ENCODE measurements at regions of chr1 and their contacts with region 1.

Region 1: DNA sequence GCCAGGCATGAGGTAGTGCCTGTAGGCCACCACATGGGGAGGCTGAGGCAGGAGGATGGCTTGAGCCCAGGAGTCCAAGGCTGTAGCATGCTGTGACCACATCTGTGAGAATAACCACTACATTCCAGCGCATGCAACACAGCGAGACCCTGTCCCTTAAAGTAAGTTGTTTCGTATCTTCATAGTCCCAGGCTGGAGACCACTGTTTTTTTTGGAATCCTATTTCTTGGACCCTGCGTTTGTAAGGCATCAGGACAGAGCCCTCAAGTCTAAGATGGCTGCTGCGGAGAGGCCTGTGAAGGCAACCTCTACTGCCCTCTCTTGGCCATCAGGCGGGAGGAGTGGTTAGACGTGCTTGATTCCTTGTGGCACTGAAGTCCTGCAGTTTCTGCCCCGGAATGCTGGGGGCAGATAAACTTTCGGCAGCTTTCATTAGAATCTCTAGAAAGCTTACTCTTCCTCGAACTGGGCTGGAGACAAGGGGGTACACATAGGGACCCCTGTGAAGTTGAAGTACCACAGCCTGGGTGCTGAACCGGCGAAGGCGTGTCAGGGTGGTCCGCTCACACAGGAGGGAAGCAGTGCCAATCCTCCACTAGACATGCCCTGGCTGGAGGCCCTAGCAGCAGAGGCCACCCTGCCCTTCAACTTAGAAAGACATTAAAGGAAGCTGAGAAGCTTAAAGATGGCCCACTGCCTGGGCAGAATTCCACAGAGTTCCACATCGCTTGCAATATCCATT is 36.6 kb downstream of the RABIF start:
- DNase-seq: no peak
- H3K4me3 Mint-ChIP-seq: no peak overlapping the region
- H3K27ac Mint-ChIP-seq: peak overlapping the region; percentile 18
- H3K4me1 Mint-ChIP-seq: peaks cover 37% of the 10 kb centered on the region
- H3K27me3 Mint-ChIP-seq: peaks cover 2% of the 10 kb centered on the region

Region 2: DNA sequence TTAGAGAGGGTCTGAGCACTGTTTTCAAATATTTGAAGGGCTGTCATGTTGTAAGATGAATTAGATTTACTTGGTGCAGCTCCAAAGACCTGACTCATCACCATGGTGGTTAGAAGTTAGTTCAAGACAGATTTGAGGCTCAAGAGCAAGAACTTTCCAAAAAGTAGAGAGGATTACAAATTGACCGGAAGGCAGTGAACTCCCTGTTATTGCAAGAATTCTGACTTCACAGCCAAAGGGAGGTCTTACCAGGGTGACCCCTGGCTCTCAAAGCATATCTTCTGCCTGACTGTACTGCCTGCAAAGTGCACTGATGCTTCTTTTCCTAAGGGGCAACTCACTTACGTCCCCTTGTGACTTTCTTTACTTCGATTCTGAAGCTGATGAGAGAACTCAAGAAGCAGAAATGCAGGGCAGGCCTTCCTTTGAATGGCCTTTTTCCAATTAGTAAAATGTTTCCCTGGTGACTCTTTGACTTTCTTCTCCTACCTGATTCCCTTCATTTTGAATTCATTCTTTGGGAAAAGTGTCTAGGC is 1227.0 kb before region 1 on chr1:
- intact Hi-C with region 1: no loop called
- DNase-seq: no peak
- H3K4me3 Mint-ChIP-seq: no peak overlapping the region
- H3K27ac Mint-ChIP-seq: no peak overlapping the region
- H3K4me1 Mint-ChIP-seq: no peaks in the 10 kb centered on the region
- H3K27me3 Mint-ChIP-seq: no peaks in the 10 kb centered on the region

Region 3: GRCh38 chr1:202750758-202751157 is 101.6 kb before region 1 on chr1:
- intact Hi-C with region 1: loop called (anchors 1 kb)
- DNase-seq: no peak
- H3K4me3 Mint-ChIP-seq: no peak overlapping the region
- H3K27ac Mint-ChIP-seq: no peak overlapping the region
- H3K4me1 Mint-ChIP-seq: no peaks in the 10 kb centered on the region
- H3K27me3 Mint-ChIP-seq: no peaks in the 10 kb centered on the region

Measured in activated T-helper 1 cell treated with anti-CD3 and anti-CD28 coated beads, Interleukin-12 subunit alpha, Interleukin-12 subunit beta, Interleukin-2, Interleukin-4 antibody, amounts not matched to agents 30 ng/mL and 10 ng/mL and 1 ng/mL, durations not matched to agents 14 hours and 24 hours and 36 hours (primary cell).